PC-9 (cell line): ENCODE measurements at regions of chr18 and their contacts with region 1.

Region 1: GRCh38 chr18:35247444-35248249 is 6.8 kb downstream of the ZNF397 start:
- DNase-seq: no peak
- H3K4me3 ChIP-seq: no peak overlapping the region
- H3K27ac ChIP-seq: no peak overlapping the region
- H3K4me1 ChIP-seq: no peaks in the 10 kb centered on the region
- H3K27me3 ChIP-seq: no peaks in the 10 kb centered on the region
- CTCF ChIP-seq: no peak

Region 2: DNA sequence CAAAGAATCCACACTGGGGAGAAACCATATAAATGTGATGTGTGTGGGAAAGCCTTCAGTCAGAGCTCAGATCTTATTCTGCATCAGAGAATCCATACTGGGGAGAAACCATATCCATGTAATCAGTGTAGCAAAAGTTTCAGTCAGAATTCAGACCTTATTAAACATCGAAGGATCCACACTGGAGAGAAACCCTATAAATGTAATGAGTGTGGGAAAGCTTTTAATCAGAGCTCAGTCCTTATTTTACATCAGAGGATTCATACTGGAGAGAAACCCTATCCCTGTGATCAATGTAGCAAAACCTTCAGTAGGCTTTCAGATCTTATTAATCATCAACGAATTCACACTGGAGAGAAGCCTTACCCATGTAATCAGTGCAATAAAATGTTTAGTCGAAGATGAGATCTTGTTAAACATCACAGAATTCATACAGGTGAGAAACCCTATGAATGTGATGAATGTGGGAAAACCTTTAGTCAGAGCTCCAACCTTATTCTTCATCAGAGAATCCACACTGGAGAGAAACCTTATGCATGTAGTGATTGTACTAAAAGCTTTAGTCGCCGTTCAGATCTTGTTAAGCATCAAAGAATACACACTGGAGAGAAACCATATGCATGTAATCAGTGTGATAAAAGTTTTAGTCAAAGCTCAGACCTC is 59.1 kb after region 1 on chr18:
- CTCF ChIA-PET with region 1: no interaction called
- POLR2A ChIA-PET with region 1: interaction called, 35 read pairs
- intact Hi-C with region 1: no loop called
- DNase-seq: no peak
- H3K4me3 ChIP-seq: no peak overlapping the region
- H3K27ac ChIP-seq: no peak overlapping the region
- H3K4me1 ChIP-seq: no peaks in the 10 kb centered on the region
- H3K27me3 ChIP-seq: no peaks in the 10 kb centered on the region
- CTCF ChIP-seq: no peak